Tibial artery (tissue), 4 donors: ENCODE measurements at regions of chr19 and their contacts with region 1.

Region 1: DNA sequence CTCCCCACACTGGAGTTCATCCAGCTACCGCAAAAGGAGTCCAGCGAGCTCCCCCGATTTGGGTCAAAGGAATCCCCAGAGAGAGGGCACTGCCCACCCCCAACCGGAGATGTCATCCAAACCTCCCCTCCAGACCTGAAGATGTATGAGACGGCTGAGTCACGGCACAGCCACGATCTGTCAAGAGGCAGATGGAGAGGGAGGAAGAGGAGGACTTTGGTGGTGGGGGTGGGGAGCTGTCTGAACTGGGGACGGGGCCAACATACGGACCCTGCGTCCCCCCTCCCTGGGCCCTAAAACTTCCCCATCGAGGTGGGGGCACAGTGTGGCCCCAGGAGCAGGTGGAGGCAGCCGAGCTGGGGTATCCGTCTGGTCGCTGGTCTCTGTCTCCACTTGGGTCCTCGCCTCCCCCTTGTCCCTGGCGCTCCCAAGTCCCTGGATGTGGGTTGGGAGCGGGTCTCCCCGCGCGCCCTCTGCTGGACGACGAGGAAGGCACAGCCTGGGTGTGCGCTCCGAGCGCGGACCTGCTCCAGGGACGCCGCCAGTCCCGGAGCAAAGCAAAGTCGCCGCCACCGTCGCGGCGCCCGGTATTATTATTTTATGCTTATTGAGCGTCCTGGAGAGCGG is 3.8 kb downstream of the PDE4A start:
- DNase-seq: peak; percentile 75 to 82
- H3K4me3 ChIP-seq: peak overlapping the region; percentile 9 to 31
- H3K27ac ChIP-seq: no peak overlapping the region
- H3K4me1 ChIP-seq: peaks cover 0 to 33% (median 29%) of the 10 kb centered on the region in 4 donors
- H3K27me3 ChIP-seq: peaks cover 0 to 61% of the 10 kb centered on the region in 2 donors
- CTCF ChIP-seq: peak; percentile 84 to 96

Region 2: DNA sequence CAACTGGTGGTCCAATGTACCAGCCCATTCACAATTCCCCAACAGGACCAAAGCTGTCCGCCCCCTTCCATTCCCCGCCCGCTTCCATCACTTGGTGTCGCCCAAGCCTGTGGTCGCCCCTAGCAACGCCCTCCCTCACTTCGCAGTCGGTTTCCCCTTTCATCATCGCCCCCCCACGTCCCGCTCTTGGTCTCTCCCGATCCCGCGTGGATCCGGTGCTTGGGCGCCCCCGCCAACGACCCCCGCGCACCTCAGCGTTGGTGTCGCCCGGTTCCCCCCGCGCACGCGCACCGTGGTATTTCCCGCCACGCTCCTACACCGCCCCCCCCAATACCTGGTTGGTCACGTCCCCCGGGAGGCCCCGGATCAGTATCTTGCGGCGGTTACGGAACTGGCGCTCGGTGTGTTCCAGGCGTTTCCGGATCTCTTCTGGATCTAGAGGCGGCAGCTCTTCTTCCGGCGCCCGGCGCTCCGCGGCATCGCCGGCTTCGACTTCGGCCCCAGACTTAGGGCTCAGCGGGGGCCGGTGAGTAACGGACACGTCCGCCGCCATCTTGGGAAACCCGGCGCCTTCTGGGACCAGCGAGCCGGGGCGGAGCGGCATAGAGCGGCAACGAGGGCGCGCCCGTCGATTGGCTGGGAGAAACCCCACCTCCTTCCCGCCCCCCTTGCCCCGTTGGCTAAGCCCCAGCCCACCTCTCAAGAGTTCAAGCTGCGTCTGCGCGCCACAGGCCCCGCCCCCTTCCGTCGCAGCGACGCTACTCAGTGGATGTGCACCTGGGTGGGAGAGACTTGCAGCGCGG is 91.0 kb before region 1 on chr19 and contains the start of gene RAVER1:
- intact Hi-C with region 1: no loop called
- DNase-seq: peak; percentile 96 to 99
- H3K4me3 ChIP-seq: peak within 1 kb of the TSS; percentile 65
- H3K27ac ChIP-seq: peak within 1 kb of the TSS; percentile 80 to 81
- H3K4me1 ChIP-seq: peaks cover 0 to 30% (median 25%) of the 10 kb centered on the region in 4 donors
- H3K27me3 ChIP-seq: no peaks in the 10 kb centered on the region
- CTCF ChIP-seq: no peak

Region 3: DNA sequence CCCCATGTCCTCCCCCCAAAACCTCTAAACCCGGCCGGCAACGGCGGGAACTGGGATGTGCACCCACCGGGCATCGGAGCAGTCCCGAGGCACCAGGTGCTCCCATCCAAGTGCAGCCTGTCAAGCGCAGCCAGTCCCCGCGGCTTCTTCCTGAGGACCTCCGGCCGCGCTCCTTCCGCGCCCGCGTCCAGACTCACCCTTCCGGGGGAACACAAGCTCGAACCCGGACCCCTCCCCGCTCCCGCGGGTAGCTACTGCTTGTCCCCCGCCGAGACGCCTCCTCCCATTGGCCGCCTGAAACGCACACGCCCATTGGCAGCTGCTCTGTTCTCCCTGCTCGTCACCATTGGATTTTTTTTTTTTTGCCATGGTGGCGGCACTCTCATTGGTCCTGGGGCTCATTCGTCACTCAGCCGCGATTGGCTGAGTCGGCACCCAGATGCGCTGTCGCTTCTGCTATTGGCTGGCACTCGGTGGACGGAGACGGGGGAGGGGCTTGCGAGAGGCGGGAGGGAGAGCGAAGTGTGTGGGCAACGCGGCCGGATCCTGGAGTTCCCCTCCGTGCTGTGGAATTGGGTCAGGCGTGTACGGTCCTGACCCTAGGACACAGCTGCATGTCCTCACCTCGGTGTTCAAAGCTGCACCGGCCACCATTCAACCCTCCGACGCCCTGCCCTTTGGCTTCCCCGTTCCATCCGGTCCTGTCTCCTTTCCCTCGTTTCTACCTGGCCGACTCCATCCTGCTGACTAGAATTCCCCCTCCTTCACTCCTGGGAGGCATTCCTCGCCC is 43.6 kb before region 1 on chr19 and contains the start of gene TYK2:
- intact Hi-C with region 1: no loop called
- DNase-seq: peak; percentile 98 to 99
- H3K4me3 ChIP-seq: peak within 1 kb of the TSS; percentile 80 to 92
- H3K27ac ChIP-seq: peak within 1 kb of the TSS; percentile 80 to 83
- H3K4me1 ChIP-seq: peaks cover 0 to 17% (median 12%) of the 10 kb centered on the region in 4 donors
- H3K27me3 ChIP-seq: no peaks in the 10 kb centered on the region
- CTCF ChIP-seq: peak in 1 of 2 experiments; percentile 12

Region 4: GRCh38 chr19:10403137-10404021 is 20.7 kb before region 1 on chr19 and contains the start of gene CDC37:
- intact Hi-C with region 1: loop called (anchors 2 kb)
- DNase-seq: peak; percentile 94 to 97
- H3K4me3 ChIP-seq: peak within 1 kb of the TSS; percentile 92 to 96
- H3K27ac ChIP-seq: peak within 1 kb of the TSS; percentile 75 to 80
- H3K4me1 ChIP-seq: peaks cover 0 to 46% (median 43%) of the 10 kb centered on the region in 4 donors
- H3K27me3 ChIP-seq: peaks cover 0 to 32% of the 10 kb centered on the region in 2 donors
- CTCF ChIP-seq: no peak

Region 5: GRCh38 chr19:10478903-10479384 is 54.8 kb after region 1 on chr19:
- intact Hi-C with region 1: loop called (anchors 10 kb)
- DNase-seq: peak; percentile 93 to 96
- H3K4me3 ChIP-seq: peak overlapping the region; percentile 56 to 64
- H3K27ac ChIP-seq: peak overlapping the region; percentile 48 to 50
- H3K4me1 ChIP-seq: peaks cover 0 to 16% (median 10%) of the 10 kb centered on the region in 4 donors
- H3K27me3 ChIP-seq: no peaks in the 10 kb centered on the region
- CTCF ChIP-seq: peak; percentile 37 to 86

Region 6: DNA sequence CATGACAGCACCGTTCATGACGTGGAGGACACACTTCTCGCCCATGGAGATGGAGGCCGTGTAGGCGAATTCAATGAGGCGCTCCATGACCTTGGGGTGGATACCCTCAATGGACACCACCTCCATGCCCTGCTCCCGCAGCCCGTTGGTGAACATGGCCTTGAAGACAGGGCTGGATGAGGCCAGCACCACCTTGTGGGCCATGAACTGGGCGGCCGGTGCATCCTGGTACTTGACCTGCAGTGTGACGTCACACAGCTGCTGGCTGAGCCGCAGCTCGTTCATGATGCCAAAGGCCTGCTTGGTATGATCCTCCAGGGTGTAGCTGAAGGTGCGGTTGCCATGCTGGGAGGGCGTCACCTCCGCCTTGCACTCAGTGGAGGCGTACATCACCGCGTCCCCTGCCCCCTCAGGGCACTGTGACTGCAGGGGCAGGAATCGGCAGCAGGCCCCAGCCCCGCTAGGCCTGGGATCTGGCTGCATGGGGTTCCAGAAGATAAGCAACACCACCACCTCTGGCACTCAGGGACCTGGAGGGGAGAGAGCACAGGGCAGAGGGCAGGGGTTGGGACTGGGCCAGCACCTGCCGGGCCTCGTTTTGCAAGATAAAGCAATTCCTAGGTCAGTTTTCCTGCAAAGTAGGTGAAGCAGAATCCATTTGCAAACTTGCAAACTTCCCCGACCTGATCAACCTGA is 75.6 kb after region 1 on chr19:
- intact Hi-C with region 1: no loop called
- DNase-seq: no peak
- H3K4me3 ChIP-seq: no peak overlapping the region
- H3K27ac ChIP-seq: peak overlapping the region in 1 of 2 donors; percentile 15
- H3K4me1 ChIP-seq: peaks cover 0 to 55% (median 36%) of the 10 kb centered on the region in 4 donors
- H3K27me3 ChIP-seq: no peaks in the 10 kb centered on the region
- CTCF ChIP-seq: no peak

Region 7: GRCh38 chr19:10747271-10747670 is 323.1 kb after region 1 on chr19:
- intact Hi-C with region 1: no loop called
- DNase-seq: no peak
- H3K4me3 ChIP-seq: no peak overlapping the region
- H3K27ac ChIP-seq: no peak overlapping the region
- H3K4me1 ChIP-seq: peaks cover 0 to 55% (median 36%) of the 10 kb centered on the region in 4 donors
- H3K27me3 ChIP-seq: no peaks in the 10 kb centered on the region
- CTCF ChIP-seq: no peak